ENCODE measurements at regions of chr15 and their contacts with region 1.

Region 1: DNA sequence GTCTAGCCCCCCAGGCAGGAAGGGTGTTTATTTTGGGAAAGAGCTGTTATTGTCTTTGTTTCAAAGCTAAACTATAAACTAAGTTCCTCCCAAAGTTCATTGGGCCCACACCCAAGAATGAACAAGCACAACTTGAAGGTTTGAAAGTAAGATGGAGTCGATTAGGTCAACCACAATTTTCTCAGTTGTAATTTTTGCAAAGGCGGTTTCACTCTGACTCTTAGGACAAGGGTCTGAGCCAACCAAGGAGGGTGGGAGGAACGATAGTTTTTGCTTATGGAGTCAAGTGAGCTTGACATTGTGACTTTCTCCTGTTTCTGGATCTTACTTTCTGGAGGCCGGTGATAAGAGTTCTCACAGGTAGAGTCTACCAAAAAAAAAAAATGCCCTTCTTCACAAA is 5.8 kb upstream of the ZNF770 start:
- DNase-seq: peak; percentile 93
- ATAC-seq: peak; percentile 95
- H3K4me3 ChIP-seq: no peak overlapping the region
- H3K27ac ChIP-seq: peak overlapping the region; percentile 66
- H3K4me1 ChIP-seq: peaks cover 33% of the 10 kb centered on the region
- H3K27me3 ChIP-seq: no peaks in the 10 kb centered on the region
- CTCF ChIP-seq: no peak
- EP300 ChIP-seq: peak in 1 of 2 experiments; percentile 41; a peak in 1 of 4 replicates
- POLR2A ChIP-seq: no peak
- RAD21 ChIP-seq: no peak

Region 2: GRCh38 chr15:35545824-35546510 is 552.1 kb after region 1 on chr15 and contains the start of gene DPH6:
- CTCF ChIA-PET with region 1: no interaction called
- POLR2A ChIA-PET with region 1: no interaction called
- RAD21 ChIA-PET with region 1: no interaction called
- SMC1A ChIA-PET with region 1: no interaction called
- in situ Hi-C with region 1: no loop called
- intact Hi-C with region 1: loop called (anchors 10 kb)
- DNase-seq: peak; percentile 46
- ATAC-seq: peak; percentile 93
- H3K4me3 ChIP-seq: peak within 1 kb of the TSS; percentile 60
- H3K27ac ChIP-seq: peak within 1 kb of the TSS; percentile 98
- H3K4me1 ChIP-seq: peaks cover 4% of the 10 kb centered on the region; the same call in 1 of the 2 replicates
- H3K27me3 ChIP-seq: no peaks in the 10 kb centered on the region
- CTCF ChIP-seq: 0 out of 6 replicates have a peak, but pooled peaks of 1 of the 3 experiments have one; percentile 5
- EP300 ChIP-seq: no peak; a peak in 1 of 4 replicates
- POLR2A ChIP-seq: peak; percentile 91; the same call in 1 of the 2 replicates
- RAD21 ChIP-seq: no peak
- polyA plus RNA-seq, gene DPH6: 56.0 to 68.5 TPM